Activated CD4-positive, alpha-beta T cell treated with anti-CD3 and anti-CD28 coated beads, Interleukin-2, amount 10 ng/mL, durations not matched to agents 7 days and 5 days (primary cell): ENCODE measurements at regions of chr20 and their contacts with region 1.

Region 1: GRCh38 chr20:33666293-33667244 is at the start of gene ACTL10:
- DNase-seq: peak; percentile 78
- H3K4me3 Mint-ChIP-seq: peak within 1 kb of the TSS; percentile 86
- H3K27ac Mint-ChIP-seq: peak within 1 kb of the TSS; percentile 97
- H3K4me1 Mint-ChIP-seq: peaks cover 59% of the 10 kb centered on the region
- H3K27me3 Mint-ChIP-seq: no peaks in the 10 kb centered on the region
- total RNA-seq, gene ACTL10: 2.4 to 4.1 TPM

Region 2: DNA sequence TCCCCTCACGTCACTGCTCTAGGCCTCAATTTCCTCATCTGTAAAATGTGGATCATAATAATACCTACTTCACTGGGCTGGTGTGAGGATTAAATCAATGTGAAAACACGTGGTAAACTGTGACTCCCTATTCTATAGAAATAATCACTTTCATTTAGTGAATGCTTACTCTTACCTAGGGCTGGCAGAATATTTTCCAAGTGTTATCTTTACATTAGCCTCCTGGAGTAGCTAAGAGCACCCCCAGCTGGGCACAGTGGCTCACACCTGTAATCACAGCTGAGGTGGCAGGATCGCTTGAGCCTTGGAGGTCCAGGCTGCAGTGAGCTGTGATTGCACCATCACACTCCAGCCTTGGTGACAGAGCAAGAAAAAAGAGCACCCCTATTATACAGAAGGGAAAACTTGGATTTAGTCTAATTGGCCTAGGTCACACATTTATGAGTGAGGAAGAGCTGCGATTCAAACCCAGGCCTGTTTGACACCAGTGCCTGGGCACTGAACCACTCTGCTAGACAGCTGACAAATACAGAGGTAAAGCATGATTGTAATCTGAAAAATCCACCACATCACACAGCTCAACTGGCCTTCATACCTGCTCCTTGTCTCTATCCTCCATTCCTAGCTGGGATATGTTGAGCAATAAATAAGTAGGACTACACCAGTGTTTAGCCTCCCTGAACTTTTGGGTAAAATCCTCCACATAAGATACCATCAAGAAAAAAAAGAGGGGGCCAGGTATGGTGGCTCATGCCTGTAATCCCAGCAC is 221.6 kb before region 1 on chr20:
- CTCF ChIA-PET with region 1: interaction called, 10 read pairs
- POLR2A ChIA-PET with region 1: no interaction called
- DNase-seq: peak; percentile 41
- H3K4me3 Mint-ChIP-seq: peak overlapping the region; percentile 86
- H3K27ac Mint-ChIP-seq: peak overlapping the region; percentile 95
- H3K4me1 Mint-ChIP-seq: peaks cover 29% of the 10 kb centered on the region
- H3K27me3 Mint-ChIP-seq: peaks cover 9% of the 10 kb centered on the region

Region 3: DNA sequence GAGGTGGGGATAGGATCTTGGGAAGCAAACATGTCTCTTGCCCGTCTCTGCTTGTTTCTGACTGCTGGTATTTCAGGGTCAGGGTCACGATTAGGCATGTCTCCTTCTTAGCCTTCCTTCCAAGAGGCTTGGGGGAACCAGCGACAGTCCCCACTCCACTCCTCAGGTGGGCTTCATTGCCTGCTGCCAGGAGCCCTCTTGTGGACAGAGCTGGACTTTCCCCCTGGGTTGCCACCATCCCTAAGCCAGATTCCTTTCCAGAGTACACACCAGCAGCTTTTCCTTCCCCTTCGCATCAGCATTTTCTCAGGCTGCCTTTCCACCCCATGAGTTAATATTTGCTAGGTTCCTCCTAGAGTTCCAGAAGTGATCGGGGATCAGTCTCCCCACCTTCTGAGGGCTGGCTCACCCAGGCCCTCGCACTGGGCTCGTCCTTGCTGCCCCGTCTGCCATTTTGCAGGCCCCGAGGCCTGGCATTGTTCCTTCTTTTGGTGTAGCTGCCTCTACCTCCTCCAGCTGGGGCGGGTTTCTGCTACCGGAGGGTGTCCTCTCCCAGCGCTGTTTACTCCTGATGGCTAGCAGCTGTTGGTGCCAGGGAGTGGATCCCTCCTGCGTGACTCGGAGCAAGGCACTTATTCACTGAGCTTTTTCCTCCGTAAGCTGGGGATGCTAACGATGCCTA is 13.2 kb before region 1 on chr20:
- CTCF ChIA-PET with region 1: interaction called, 26 read pairs
- POLR2A ChIA-PET with region 1: no interaction called
- DNase-seq: peak; percentile 38
- H3K4me3 Mint-ChIP-seq: no peak overlapping the region
- H3K27ac Mint-ChIP-seq: peak overlapping the region; percentile 50
- H3K4me1 Mint-ChIP-seq: peaks cover 18% of the 10 kb centered on the region
- H3K27me3 Mint-ChIP-seq: no peaks in the 10 kb centered on the region

Region 4: DNA sequence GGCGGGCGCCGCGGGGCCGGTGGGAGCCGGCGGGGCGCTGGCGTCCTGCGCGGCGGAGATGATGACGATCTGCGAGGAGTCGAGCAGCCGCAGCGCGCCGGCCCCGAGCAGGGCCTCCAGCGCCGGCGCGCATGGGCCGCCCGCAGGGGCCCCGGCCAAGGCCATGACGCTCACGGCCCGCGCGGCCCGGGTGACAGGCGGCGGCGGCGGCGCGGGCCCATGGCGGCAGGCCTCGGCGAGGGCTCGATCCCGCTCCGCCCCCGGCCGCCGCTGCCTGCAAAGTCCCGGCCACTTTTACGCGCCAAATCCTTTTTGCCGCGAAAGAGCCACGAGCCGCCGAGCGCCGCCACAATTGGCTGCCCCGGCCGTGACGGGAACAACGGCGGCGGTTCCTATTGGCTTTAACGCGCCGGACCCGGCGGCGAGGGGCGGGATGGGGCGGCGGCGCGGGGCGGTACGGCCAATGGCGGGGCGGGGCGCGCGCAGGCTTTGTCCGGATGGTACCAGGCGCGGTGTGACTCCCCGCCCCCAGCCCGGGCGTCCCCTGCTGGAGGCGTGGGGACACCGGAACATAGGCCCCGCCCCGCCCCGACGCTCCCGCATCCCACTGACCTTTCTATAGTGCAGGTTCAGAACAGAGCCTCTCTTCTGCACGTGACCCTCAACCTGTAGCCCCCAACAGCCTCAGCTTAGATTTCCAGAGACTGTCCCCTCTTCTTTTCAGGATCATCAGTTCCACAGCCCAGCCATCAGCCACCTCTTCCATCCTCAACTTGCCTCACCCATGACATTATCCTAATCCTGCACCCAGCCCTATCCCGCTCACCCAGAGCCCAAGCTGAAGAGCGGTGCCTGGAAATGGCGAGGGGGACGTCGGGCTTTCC is 19.8 kb after region 1 on chr20 and contains the start of gene E2F1:
- CTCF ChIA-PET with region 1: interaction called, 115 read pairs
- POLR2A ChIA-PET with region 1: interaction called, 3 read pairs
- DNase-seq: peak; percentile 96
- H3K4me3 Mint-ChIP-seq: peak within 1 kb of the TSS; percentile 91
- H3K27ac Mint-ChIP-seq: peak within 1 kb of the TSS; percentile 94
- H3K4me1 Mint-ChIP-seq: peaks cover 85% of the 10 kb centered on the region
- H3K27me3 Mint-ChIP-seq: no peaks in the 10 kb centered on the region
- total RNA-seq, gene E2F1: 64.9 to 69.8 TPM

Region 5: DNA sequence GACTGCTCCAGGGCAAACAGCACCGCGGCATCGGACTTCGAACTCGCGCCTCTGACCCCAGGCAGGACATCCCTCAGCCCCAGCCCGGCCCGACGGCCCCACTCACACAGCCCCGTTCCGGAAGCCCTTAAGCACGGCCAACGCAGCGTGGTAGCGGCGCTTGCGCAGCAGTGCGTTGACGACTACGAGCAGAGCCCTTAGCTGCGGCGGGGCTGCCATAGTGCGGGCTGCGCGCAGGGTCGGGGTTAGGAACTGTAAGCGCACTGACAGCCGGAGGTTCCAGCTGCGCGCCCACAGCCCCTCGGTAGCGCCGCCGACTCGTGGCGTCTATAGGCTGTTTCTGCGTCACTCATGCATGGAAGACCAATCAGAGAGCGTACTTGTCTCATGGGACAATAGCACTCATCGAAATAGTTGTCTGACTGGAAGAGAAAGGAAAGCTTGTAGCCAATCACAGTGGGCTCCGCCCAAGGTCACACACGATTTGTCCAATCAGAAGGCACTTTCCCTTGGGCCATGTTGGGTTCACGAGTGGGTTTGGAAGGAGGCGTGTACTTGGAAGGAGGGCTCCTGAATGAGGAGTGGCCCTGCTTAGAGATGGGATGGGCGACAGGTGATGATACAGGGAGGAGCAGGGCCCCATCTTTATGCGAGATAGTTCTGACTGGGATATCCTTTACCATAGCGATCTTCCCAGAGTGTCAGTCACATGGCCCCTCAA is 53.6 kb after region 1 on chr20 and contains the start of gene PXMP4:
- CTCF ChIA-PET with region 1: interaction called, 11 read pairs
- POLR2A ChIA-PET with region 1: interaction called, 4 read pairs
- DNase-seq: peak; percentile 94
- H3K4me3 Mint-ChIP-seq: peak within 1 kb of the TSS; percentile 87
- H3K27ac Mint-ChIP-seq: peak within 1 kb of the TSS; percentile 85
- H3K4me1 Mint-ChIP-seq: peaks cover 29% of the 10 kb centered on the region
- H3K27me3 Mint-ChIP-seq: no peaks in the 10 kb centered on the region
- total RNA-seq, gene PXMP4: 19.1 to 21.8 TPM

Region 6: GRCh38 chr20:33731693-33732165 is 65.2 kb after region 1 on chr20 and contains the start of gene ZNF341:
- CTCF ChIA-PET with region 1: interaction called, 10 read pairs
- POLR2A ChIA-PET with region 1: interaction called, 3 read pairs
- DNase-seq: peak; percentile 90
- H3K4me3 Mint-ChIP-seq: peak within 1 kb of the TSS; percentile 89
- H3K27ac Mint-ChIP-seq: peak within 1 kb of the TSS; percentile 96
- H3K4me1 Mint-ChIP-seq: peaks cover 30% of the 10 kb centered on the region
- H3K27me3 Mint-ChIP-seq: no peaks in the 10 kb centered on the region
- total RNA-seq, gene ZNF341: 5.5 to 5.8 TPM